Esophagus muscularis mucosa (tissue), 4 donors: ENCODE measurements at regions of chr11 and their contacts with region 1.

Region 1: GRCh38 chr11:93234602-93235207 is 36.9 kb upstream of the SLC36A4 start:
- DNase-seq: no peak
- H3K4me3 ChIP-seq: no peak overlapping the region
- H3K27ac ChIP-seq: no peak overlapping the region
- H3K4me1 ChIP-seq: no peaks in the 10 kb centered on the region
- H3K27me3 ChIP-seq: peaks cover 0 to 17% (median 0%) of the 10 kb centered on the region in 4 donors
- CTCF ChIP-seq: peak in 2 of 3 experiments; percentile 80 to 85
- EP300 ChIP-seq: no peak
- POLR2A ChIP-seq: no peak

Region 2: DNA sequence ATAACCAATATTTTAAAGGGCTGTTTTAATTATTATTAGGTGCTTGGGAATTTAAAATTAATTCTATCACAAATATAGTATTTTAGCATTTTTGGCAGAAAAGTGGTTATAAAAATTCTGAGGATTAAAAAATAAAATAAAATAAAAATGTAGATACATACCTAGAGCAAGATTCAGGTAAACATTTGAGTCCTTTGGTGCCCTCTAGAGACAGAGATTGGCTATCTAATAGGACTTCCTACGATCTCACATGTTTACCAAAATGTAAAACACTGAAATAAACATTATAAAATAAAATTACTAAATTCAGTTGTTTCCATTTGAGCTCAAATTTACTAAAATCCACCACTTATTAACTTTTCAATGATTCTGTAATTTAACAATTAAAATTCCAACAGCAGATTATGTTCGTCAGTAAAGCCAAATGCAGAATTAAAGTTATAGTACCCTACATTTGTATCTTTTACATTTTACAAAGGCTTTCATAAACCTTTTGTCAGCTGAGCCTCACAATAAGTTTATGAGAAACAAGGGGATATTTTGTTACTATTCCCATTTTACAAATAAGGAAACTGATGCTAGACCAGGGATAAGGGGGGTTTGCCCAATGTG is 64.6 kb before region 1 on chr11:
- intact Hi-C with region 1: loop called (anchors 10 kb)
- DNase-seq: no peak
- H3K4me3 ChIP-seq: no peak overlapping the region
- H3K27ac ChIP-seq: no peak overlapping the region
- H3K4me1 ChIP-seq: no peaks in the 10 kb centered on the region
- H3K27me3 ChIP-seq: no peaks in the 10 kb centered on the region
- CTCF ChIP-seq: peak in 2 of 3 experiments; percentile 22 to 34
- EP300 ChIP-seq: no peak
- POLR2A ChIP-seq: no peak

Region 3: DNA sequence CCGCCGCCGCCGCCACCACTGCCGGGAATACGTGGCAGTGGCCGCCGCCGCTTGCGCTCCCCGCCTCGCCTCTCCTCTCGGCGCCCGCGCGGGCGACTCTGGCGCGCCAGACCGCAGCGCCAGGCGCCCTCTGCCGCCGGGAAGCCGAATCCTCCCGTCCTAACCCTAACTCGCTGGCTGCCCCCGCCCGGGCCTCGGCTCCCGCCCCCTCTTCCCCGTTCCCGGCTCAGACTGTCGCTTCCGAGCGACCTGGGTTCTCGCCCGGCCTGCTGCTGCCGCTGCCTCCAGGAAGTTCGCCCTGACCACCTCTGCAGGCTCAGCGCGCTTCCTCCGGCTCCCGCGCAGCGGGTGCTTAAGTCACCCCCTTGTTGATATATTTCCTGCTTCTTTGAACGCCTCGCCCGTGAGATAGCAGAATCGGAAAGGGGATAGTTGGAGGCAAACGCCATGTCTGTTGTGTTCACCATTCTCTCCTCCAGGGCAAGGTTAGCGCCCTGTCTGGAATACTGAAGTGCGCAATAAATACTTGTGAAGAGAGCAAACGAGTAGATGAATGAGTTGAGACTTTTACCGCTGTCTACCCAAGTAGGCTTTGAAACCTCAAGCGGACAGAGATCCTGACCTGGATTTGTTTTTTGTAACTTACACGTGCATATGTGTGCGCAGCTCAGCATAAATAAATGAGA is 308.7 kb after region 1 on chr11 and contains the start of gene SMCO4:
- intact Hi-C with region 1: loop called (anchors 2 kb)
- DNase-seq: no peak
- H3K4me3 ChIP-seq: peak within 1 kb of the TSS; percentile 85 to 94 (median 88)
- H3K27ac ChIP-seq: peak within 1 kb of the TSS; percentile 84 to 93 (median 86)
- H3K4me1 ChIP-seq: peaks cover 8 to 37% (median 26%) of the 10 kb centered on the region in 4 donors
- H3K27me3 ChIP-seq: no peaks in the 10 kb centered on the region
- CTCF ChIP-seq: peak; percentile 65 to 83 (median 66)
- EP300 ChIP-seq: no peak
- POLR2A ChIP-seq: no peak
- total RNA-seq, gene SMCO4: 6.2 to 18.6 (median 10.3) TPM

Region 4: DNA sequence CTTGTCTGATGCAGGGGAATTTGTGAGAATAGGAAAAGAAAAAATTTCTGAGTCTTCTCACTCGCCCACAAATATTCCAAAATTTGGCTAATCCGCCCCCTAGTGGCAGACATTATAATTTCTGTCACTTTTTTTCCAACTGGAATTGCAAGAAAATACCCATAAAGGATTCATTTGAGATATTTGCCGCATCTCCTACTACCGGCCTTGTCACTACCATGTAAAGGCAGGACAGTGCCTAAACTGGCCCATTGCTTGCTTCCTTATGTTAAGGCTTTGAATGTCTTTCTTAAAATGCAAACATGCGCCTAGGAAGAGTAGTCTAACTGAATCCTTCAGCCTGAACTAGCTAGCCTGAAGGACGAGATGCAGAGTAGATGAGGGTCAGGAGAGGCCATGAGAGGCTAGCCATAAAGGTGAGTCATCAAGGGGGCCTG is 417.5 kb after region 1 on chr11:
- intact Hi-C with region 1: loop called (anchors 2 kb)
- DNase-seq: peak; percentile 42
- H3K4me3 ChIP-seq: no peak overlapping the region
- H3K27ac ChIP-seq: no peak overlapping the region
- H3K4me1 ChIP-seq: peaks cover 0 to 6% (median 0%) of the 10 kb centered on the region in 4 donors
- H3K27me3 ChIP-seq: peaks cover 0 to 3% (median 0%) of the 10 kb centered on the region in 4 donors
- CTCF ChIP-seq: peak; percentile 62 to 73 (median 71)
- EP300 ChIP-seq: no peak
- POLR2A ChIP-seq: no peak